ENCODE measurements at regions of chr2 and their contacts with region 1.

Region 1: DNA sequence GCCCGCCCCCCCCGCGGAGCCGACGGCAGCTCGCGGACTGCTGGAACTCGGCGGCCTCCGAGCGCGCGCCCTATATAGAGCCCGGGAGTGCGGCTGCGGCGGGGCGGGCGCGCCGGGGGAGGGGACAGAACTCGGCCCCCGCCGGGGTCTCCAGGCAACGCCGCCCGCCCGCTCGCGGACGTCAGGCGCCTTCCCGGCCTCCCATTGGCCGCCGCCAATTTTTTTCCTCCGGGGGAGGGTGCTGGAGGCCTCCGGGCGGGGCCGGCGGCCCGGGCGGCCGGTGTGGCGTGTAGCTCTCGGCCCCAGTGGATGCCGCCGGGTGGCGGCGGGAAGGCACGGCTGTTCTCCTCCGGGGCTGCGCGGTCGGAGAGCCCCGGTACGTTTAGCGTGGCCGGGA is at the start of gene ZFP36L2:
- DNase-seq: peak; percentile 98
- ATAC-seq: peak; percentile 75
- total RNA-seq, gene ZFP36L2: 172 TPM

Region 2: DNA sequence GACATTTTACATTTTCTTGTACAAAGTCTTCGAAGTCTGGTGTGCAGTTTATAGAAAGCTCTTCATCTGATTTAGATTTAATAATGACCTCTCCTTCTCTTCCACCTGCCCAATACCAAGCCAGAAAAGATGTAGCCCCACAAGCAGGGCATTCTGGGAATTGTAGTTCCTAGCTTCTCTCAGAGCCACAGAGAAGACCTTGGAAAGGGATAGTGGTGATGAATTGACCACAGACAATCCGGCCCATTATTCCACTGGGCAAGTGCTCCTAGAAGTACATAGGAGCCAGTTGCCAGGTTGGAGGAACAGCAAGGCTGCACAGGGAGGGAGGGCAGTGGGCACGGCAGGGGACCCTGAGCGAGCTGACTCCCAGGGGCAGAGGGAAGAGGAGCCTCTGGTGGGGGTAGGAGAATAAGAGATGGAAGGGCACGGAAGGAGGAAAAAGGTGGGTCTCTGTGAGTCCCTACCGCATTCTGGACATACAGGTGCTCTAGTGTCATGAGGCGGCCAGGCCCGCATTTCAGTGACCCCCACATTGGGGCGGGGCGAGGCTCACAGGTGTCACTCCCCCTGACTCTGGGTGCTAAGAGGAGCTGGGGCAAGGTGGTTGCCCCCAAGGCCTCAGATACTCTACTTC is 281.7 kb before region 1 on chr2:
- intact Hi-C with region 1: loop called (anchors 5 kb)
- DNase-seq: no peak
- ATAC-seq: no peak

Region 3: GRCh38 chr2:42974721-42975717 is 251.5 kb before region 1 on chr2:
- intact Hi-C with region 1: loop called (anchors 5 kb)
- DNase-seq: peak; percentile 91
- ATAC-seq: peak; percentile 94

Region 4: DNA sequence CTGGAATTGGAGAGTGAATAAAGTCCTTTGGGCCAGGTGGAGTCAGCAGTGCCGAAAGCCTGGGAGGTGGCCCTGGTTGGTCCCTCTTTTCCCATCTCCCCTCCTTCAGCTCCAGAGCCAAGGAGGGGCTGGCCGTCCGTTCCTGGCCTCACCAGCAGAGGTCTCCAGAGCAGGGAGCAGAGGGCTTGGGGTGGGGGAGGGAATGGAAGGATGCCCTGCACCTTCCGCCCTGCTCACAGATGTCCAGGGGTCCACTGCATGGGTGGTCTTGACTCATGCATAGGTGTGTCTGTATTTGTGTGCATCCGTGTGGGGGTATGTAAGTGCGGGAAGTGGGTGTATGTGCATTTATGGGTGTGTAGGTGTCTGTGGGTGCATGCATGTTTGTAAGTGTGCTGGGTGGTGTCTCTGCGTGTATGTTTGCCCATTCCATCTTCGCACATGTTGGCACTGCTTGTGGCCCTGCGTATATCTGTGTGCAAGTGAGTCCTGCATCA is 202.0 kb before region 1 on chr2:
- intact Hi-C with region 1: loop called (anchors 2 kb)
- DNase-seq: peak; percentile 89
- ATAC-seq: peak; percentile 81

Region 5: GRCh38 chr2:43131024-43131889 is 95.3 kb before region 1 on chr2:
- intact Hi-C with region 1: loop called (anchors 10 kb)
- DNase-seq: no peak
- ATAC-seq: peak; percentile 43

Measured in sciatic nerve (tissue), 2 donors.